PC-3 (cell line): ENCODE measurements at regions of chr12 and their contacts with region 1.

Region 1: GRCh38 chr12:126483145-126484068 is 1418.2 kb downstream of the AACS start:
- DNase-seq: peak; percentile 81
- ATAC-seq: peak; percentile 90
- H3K4me3 ChIP-seq: peak overlapping the region; percentile 43
- H3K27ac ChIP-seq: peak overlapping the region; percentile 43
- H3K4me1 ChIP-seq: peaks cover 12% of the 10 kb centered on the region
- H3K27me3 ChIP-seq: no peaks in the 10 kb centered on the region
- CTCF ChIP-seq: no peak

Region 2: GRCh38 chr12:126312457-126312856 is 170.9 kb before region 1 on chr12:
- CTCF ChIA-PET with region 1: no interaction called
- POLR2A ChIA-PET with region 1: interaction called, 16 read pairs
- intact Hi-C with region 1: no loop called
- DNase-seq: no peak
- ATAC-seq: no peak
- H3K4me3 ChIP-seq: no peak overlapping the region
- H3K27ac ChIP-seq: no peak overlapping the region
- H3K4me1 ChIP-seq: no peaks in the 10 kb centered on the region
- H3K27me3 ChIP-seq: no peaks in the 10 kb centered on the region
- CTCF ChIP-seq: no peak

Region 3: DNA sequence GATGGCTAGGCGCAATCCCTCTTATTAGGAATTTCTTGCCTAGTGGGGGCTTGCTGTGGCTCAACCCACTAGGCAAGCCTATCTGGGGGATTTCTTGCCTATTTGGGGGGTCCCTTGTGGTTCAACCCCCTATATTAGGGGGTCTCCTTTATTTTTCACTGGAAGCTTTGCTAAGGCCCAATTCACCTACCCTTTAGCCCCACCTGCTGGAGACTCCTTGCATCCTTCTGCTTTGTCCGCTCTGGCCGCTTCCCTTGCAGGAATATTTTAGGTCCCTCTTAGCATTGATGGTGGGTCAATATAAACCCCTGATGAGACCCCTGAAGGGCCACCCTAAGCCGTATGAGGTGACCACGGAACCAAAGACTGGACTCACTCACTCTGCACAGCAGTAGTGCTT is 133.9 kb after region 1 on chr12:
- CTCF ChIA-PET with region 1: no interaction called
- POLR2A ChIA-PET with region 1: no interaction called
- intact Hi-C with region 1: no loop called
- DNase-seq: peak; percentile 53
- ATAC-seq: no peak; the same call in 1 of the 2 replicates
- H3K4me3 ChIP-seq: no peak overlapping the region
- H3K27ac ChIP-seq: no peak overlapping the region
- H3K4me1 ChIP-seq: no peaks in the 10 kb centered on the region
- H3K27me3 ChIP-seq: no peaks in the 10 kb centered on the region
- CTCF ChIP-seq: peak; percentile 74